ENCODE measurements at regions of chr3 and their contacts with region 1.

Region 1: GRCh38 chr3:20039766-20040475 is at the start of gene KAT2B:
- DNase-seq: peak in 1 of 2 donors; percentile 87
- H3K4me3 ChIP-seq: peak within 1 kb of the TSS; percentile 74 to 88
- H3K27ac ChIP-seq: peak within 1 kb of the TSS; percentile 96 to 97
- H3K4me1 ChIP-seq: peaks cover 8 to 32% of the 10 kb centered on the region in 2 donors
- H3K27me3 ChIP-seq: no peaks in the 10 kb centered on the region
- CTCF ChIP-seq: peak; percentile 39 to 81 (median 77)
- total RNA-seq, gene KAT2B: 10.5 TPM

Region 2: GRCh38 chr3:19427422-19428149 is 612.3 kb before region 1 on chr3:
- intact Hi-C with region 1: loop called (anchors 10 kb)
- DNase-seq: no peak
- H3K4me3 ChIP-seq: no peak overlapping the region
- H3K27ac ChIP-seq: no peak overlapping the region
- H3K4me1 ChIP-seq: no peaks in the 10 kb centered on the region
- H3K27me3 ChIP-seq: no peaks in the 10 kb centered on the region
- CTCF ChIP-seq: no peak

Region 3: GRCh38 chr3:20056725-20057590 is 17.0 kb after region 1 on chr3:
- intact Hi-C with region 1: loop called (anchors 2 kb)
- DNase-seq: no peak
- H3K4me3 ChIP-seq: no peak overlapping the region
- H3K27ac ChIP-seq: peak overlapping the region; percentile 73 to 78
- H3K4me1 ChIP-seq: peaks cover 15 to 31% of the 10 kb centered on the region in 2 donors
- H3K27me3 ChIP-seq: no peaks in the 10 kb centered on the region
- CTCF ChIP-seq: no peak

Region 4: GRCh38 chr3:20096135-20096685 is 56.3 kb after region 1 on chr3:
- intact Hi-C with region 1: loop called (anchors 2 kb)
- DNase-seq: no peak
- H3K4me3 ChIP-seq: no peak overlapping the region
- H3K27ac ChIP-seq: peak overlapping the region; percentile 28 to 64
- H3K4me1 ChIP-seq: peaks cover 0 to 18% of the 10 kb centered on the region in 2 donors
- H3K27me3 ChIP-seq: no peaks in the 10 kb centered on the region
- CTCF ChIP-seq: no peak